ENCODE measurements at regions of chr7 and their contacts with region 1.

Region 1: GRCh38 chr7:131231381-131232220 is 96.1 kb upstream of the MKLN1 start:
- DNase-seq: peak; percentile 30 to 83 (median 74)
- ATAC-seq: peak; percentile 85
- H3K4me3 ChIP-seq: peak overlapping the region; percentile 33
- H3K4me3 Mint-ChIP-seq: peak overlapping the region; percentile 63 to 88 (median 82)
- H3K27ac ChIP-seq: peak overlapping the region; percentile 59
- H3K27ac Mint-ChIP-seq: peak overlapping the region; percentile 66 to 94 (median 91)
- H3K4me1 ChIP-seq: peaks cover 24 to 28% of the 10 kb centered on the region in 2 donors
- H3K4me1 Mint-ChIP-seq: peaks cover 21 to 67% (median 45%) of the 10 kb centered on the region in 7 donors
- H3K27me3 ChIP-seq: no peaks in the 10 kb centered on the region
- H3K27me3 Mint-ChIP-seq: no peaks in the 10 kb centered on the region

Region 2: GRCh38 chr7:131071786-131072504 is 159.7 kb before region 1 on chr7:
- CTCF ChIA-PET with region 1: interaction called, 4 read pairs
- POLR2A ChIA-PET with region 1: no interaction called
- intact Hi-C with region 1: loop called in 1 of 2 experiments (anchors 1 kb)
- DNase-seq: no peak
- ATAC-seq: no peak
- H3K4me3 ChIP-seq: no peak overlapping the region
- H3K4me3 Mint-ChIP-seq: peak overlapping the region in 5 of 10 donors; percentile 14 to 54 (median 45)
- H3K27ac ChIP-seq: no peak overlapping the region
- H3K27ac Mint-ChIP-seq: peak overlapping the region in 7 of 9 donors; percentile 39 to 67 (median 52)
- H3K4me1 ChIP-seq: peaks cover 39 to 69% of the 10 kb centered on the region in 2 donors
- H3K4me1 Mint-ChIP-seq: peaks cover 33 to 72% (median 55%) of the 10 kb centered on the region in 7 donors
- H3K27me3 ChIP-seq: no peaks in the 10 kb centered on the region
- H3K27me3 Mint-ChIP-seq: no peaks in the 10 kb centered on the region

Region 3: DNA sequence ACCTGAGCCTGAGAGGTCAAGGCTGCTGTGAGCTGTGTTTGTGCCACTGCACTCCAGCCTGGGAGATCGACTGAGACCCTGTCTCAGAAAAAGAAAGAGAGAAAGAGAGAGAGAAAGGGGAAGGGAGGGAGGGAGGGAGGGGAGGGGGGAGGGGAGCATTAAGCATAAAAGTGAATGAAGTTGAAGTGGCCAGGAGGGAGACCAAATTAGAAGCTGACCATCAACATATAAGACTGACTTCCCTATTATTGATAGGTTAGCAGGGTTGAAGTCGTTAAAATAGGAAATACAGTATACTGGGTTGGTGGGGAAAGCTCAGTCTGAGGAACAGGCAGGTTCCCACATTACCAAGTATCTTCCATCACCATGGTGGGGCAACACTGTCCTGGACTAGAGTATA is 21.0 kb before region 1 on chr7:
- CTCF ChIA-PET with region 1: no interaction called
- POLR2A ChIA-PET with region 1: interaction called, 3 read pairs
- intact Hi-C with region 1: loop called in 1 of 2 experiments (anchors 2 kb)
- DNase-seq: no peak
- ATAC-seq: no peak
- H3K4me3 ChIP-seq: no peak overlapping the region
- H3K4me3 Mint-ChIP-seq: no peak overlapping the region
- H3K27ac ChIP-seq: no peak overlapping the region
- H3K27ac Mint-ChIP-seq: peak overlapping the region in 3 of 9 donors; percentile 30 to 83 (median 74)
- H3K4me1 ChIP-seq: no peaks in the 10 kb centered on the region
- H3K4me1 Mint-ChIP-seq: peaks cover 0 to 3% (median 0%) of the 10 kb centered on the region in 7 donors
- H3K27me3 ChIP-seq: no peaks in the 10 kb centered on the region
- H3K27me3 Mint-ChIP-seq: peaks cover 0 to 2% (median 0%) of the 10 kb centered on the region in 5 donors

Region 4: DNA sequence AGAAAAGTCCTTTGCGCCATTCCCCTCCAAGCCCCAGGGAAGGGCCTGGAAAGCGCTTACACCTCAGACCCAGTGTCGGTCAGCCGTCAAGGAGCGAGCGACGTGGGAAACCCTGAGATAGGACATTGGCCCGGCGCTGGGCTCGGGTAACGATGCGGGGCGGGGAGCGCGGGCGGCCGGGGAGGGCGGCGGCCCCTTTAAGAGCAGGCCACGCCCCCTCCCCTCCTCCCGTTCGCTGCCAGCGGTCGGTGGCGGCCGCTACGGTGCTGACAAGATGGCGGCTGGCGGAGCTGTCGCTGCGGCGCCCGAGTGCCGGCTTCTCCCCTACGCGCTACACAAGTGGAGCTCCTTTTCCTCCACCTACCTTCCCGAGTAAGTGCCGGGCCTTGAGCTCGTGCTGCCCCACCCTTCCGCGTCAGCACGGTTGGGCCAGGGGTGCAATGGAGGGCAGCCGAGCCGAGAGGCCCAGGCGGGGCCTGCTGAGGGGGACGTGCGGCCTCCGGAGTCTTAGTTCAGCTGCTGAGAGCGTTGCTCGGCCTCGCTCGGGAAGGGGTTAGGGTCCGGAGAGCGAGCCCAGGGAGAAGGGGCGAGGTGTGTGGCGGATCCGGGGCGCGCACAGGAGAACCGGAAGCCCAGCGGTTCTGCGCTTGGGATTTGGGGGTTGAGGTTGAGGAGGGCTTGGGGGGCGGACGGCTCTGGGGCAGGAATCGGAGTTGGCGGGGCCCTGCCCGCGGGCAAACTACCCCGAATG is 96.2 kb after region 1 on chr7 and contains the start of gene MKLN1:
- CTCF ChIA-PET with region 1: no interaction called
- POLR2A ChIA-PET with region 1: interaction called, 5 read pairs
- intact Hi-C with region 1: loop called (anchors 1 kb)
- DNase-seq: peak; percentile 82 to 91 (median 86)
- ATAC-seq: peak; percentile 99
- H3K4me3 ChIP-seq: peak within 1 kb of the TSS; percentile 88
- H3K4me3 Mint-ChIP-seq: peak within 1 kb of the TSS; percentile 88 to 100 (median 94)
- H3K27ac ChIP-seq: peak within 1 kb of the TSS; percentile 94
- H3K27ac Mint-ChIP-seq: peak within 1 kb of the TSS; percentile 86 to 99 (median 97)
- H3K4me1 ChIP-seq: peaks cover 26 to 43% of the 10 kb centered on the region in 2 donors
- H3K4me1 Mint-ChIP-seq: peaks cover 35 to 85% (median 71%) of the 10 kb centered on the region in 7 donors
- H3K27me3 ChIP-seq: no peaks in the 10 kb centered on the region
- H3K27me3 Mint-ChIP-seq: no peaks in the 10 kb centered on the region
- total RNA-seq, gene MKLN1: 42.0 to 69.8 (median 59.3) TPM

Region 5: GRCh38 chr7:132430861-132431822 is 1199.5 kb after region 1 on chr7:
- CTCF ChIA-PET with region 1: no interaction called
- POLR2A ChIA-PET with region 1: no interaction called
- intact Hi-C with region 1: loop called in 1 of 2 experiments (anchors 10 kb)
- DNase-seq: peak in 8 of 9 donors; percentile 18 to 75 (median 60)
- ATAC-seq: peak; percentile 85
- H3K4me3 ChIP-seq: peak overlapping the region; percentile 21
- H3K4me3 Mint-ChIP-seq: peak overlapping the region; percentile 22 to 83 (median 58)
- H3K27ac ChIP-seq: peak overlapping the region; percentile 34
- H3K27ac Mint-ChIP-seq: peak overlapping the region; percentile 70 to 97 (median 87)
- H3K4me1 ChIP-seq: peaks cover 47 to 69% of the 10 kb centered on the region in 2 donors
- H3K4me1 Mint-ChIP-seq: peaks cover 49 to 93% (median 83%) of the 10 kb centered on the region in 7 donors
- H3K27me3 ChIP-seq: no peaks in the 10 kb centered on the region
- H3K27me3 Mint-ChIP-seq: no peaks in the 10 kb centered on the region

Measured in naive thymus-derived CD4-positive, alpha-beta T cell (primary cell).